ENCODE measurements at regions of chr12 and their contacts with region 1.

Region 1: GRCh38 chr12:50776749-50777728 is 13.1 kb downstream of the ATF1 start:
- DNase-seq: no peak
- H3K27ac ChIP-seq: peak overlapping the region; percentile 33; the same call in 1 of the 2 replicates
- CTCF ChIP-seq: no peak

Region 2: GRCh38 chr12:51401020-51401419 is 624.0 kb after region 1 on chr12:
- CTCF ChIA-PET with region 1: no interaction called
- POLR2A ChIA-PET with region 1: interaction called, 10 read pairs
- DNase-seq: no peak
- H3K27ac ChIP-seq: no peak overlapping the region
- CTCF ChIP-seq: no peak

Region 3: DNA sequence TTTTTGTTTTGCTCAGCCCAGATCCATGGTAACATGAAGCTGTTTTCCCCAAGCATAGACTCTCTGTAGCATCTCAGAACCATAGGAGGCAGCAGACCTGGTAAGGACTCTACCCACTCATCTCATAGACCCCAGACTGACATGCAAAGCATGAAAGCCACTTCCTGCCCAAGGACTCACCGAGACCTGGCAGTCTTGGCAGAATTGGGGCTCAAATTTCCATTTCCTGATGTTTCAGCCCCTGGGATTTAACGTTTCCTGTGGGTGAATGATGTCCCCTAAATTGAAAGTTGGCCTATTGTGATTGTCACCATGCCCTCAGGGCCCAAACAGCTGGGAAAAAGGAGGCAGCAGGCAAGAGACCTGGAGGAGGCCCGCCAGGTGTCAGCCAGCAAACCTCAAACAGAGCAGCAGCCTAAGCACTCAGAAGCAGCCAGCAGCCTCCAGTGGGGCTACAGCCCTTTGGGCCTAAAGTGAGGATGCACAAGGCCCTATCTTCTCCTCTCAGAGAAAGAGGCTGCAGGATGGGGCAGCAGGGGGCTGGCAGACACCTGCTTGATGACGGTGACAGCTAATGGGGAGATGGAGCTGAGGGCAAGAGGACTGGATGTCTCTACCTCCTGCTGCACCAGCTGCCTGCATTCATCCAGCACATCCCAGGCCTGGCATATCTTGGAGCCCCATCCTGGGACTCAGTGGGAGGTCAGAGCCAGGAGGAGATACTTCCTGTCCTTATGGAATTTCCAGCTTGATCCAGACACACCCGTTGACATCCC is 1581.7 kb after region 1 on chr12:
- CTCF ChIA-PET with region 1: no interaction called
- POLR2A ChIA-PET with region 1: no interaction called
- DNase-seq: no peak
- H3K27ac ChIP-seq: no peak overlapping the region
- CTCF ChIP-seq: no peak